IMR-90 (cell line): ENCODE measurements at regions of chr5 and their contacts with region 1.

Region 1: DNA sequence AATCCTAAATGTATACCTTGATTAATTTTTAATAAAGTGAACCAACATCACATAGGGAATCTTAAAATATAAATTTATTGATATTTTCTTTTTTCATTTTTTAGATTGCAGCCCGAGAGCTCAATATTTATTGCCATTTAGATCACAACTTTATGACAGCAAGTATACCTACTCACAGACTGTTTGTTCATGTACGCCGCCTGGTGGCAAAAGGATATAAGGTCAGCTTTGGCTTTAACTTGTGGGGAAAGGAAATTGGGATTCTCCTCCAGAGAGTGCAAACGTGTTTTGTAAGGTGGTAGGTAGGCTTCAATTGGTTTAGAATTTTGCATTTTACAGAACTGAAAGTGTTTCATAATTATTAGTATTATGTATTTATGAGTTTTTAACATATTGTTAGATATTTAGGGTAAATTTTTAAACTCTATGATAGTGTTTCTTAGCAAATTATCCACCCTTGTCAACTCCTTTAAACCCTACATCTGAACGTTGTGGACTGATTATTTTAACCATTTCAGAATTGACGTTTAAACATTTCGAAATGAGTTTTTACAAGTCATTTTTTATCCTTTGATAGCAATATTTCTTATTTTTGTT is 17.5 kb upstream of the DHFR start:
- DNase-seq: peak; percentile 72
- ATAC-seq: peak; percentile 93
- H3K4me3 ChIP-seq: no peak overlapping the region
- H3K27ac ChIP-seq: no peak overlapping the region
- H3K4me1 ChIP-seq: no peaks in the 10 kb centered on the region; the same call in 1 of the 2 replicates
- H3K27me3 ChIP-seq: no peaks in the 10 kb centered on the region
- CTCF ChIP-seq: peak; percentile 76
- POLR2A ChIP-seq: no peak
- RAD21 ChIP-seq: peak; percentile 73

Region 2: GRCh38 chr5:80481019-80481893 is 191.0 kb before region 1 on chr5:
- CTCF ChIA-PET with region 1: interaction called, 9 read pairs
- POLR2A ChIA-PET with region 1: no interaction called
- dilution Hi-C with region 1: no loop called
- in situ Hi-C with region 1: loop called (anchors 5 kb)
- intact Hi-C with region 1: loop called (anchors 2 kb)
- DNase-seq: peak; percentile 60
- ATAC-seq: peak; percentile 94
- H3K4me3 ChIP-seq: no peak overlapping the region
- H3K27ac ChIP-seq: no peak overlapping the region
- H3K4me1 ChIP-seq: no peaks in the 10 kb centered on the region
- H3K27me3 ChIP-seq: no peaks in the 10 kb centered on the region
- CTCF ChIP-seq: peak; percentile 72
- POLR2A ChIP-seq: no peak
- RAD21 ChIP-seq: peak; percentile 66

Region 3: GRCh38 chr5:80487829-80488721 is 184.2 kb before region 1 on chr5 and contains the start of gene FAM151B:
- CTCF ChIA-PET with region 1: no interaction called
- POLR2A ChIA-PET with region 1: no interaction called
- dilution Hi-C with region 1: no loop called
- in situ Hi-C with region 1: loop called (anchors 5 kb)
- intact Hi-C with region 1: loop called (anchors 2 kb)
- DNase-seq: peak; percentile 87
- ATAC-seq: peak; percentile 97
- H3K4me3 ChIP-seq: peak within 1 kb of the TSS; percentile 87
- H3K27ac ChIP-seq: peak within 1 kb of the TSS; percentile 74
- H3K4me1 ChIP-seq: no peaks in the 10 kb centered on the region
- H3K27me3 ChIP-seq: no peaks in the 10 kb centered on the region
- CTCF ChIP-seq: peak; percentile 24; the same call in 1 of the 2 replicates
- POLR2A ChIP-seq: peak; percentile 52; the same call in 1 of the 2 replicates
- RAD21 ChIP-seq: no peak; the same call in 1 of the 2 replicates
- total RNA-seq, gene FAM151B: 2.8 and 2.9 TPM in 2 replicates